HepG2 (cell line): ENCODE measurements at regions of chr5 and their contacts with region 1.

Region 1: DNA sequence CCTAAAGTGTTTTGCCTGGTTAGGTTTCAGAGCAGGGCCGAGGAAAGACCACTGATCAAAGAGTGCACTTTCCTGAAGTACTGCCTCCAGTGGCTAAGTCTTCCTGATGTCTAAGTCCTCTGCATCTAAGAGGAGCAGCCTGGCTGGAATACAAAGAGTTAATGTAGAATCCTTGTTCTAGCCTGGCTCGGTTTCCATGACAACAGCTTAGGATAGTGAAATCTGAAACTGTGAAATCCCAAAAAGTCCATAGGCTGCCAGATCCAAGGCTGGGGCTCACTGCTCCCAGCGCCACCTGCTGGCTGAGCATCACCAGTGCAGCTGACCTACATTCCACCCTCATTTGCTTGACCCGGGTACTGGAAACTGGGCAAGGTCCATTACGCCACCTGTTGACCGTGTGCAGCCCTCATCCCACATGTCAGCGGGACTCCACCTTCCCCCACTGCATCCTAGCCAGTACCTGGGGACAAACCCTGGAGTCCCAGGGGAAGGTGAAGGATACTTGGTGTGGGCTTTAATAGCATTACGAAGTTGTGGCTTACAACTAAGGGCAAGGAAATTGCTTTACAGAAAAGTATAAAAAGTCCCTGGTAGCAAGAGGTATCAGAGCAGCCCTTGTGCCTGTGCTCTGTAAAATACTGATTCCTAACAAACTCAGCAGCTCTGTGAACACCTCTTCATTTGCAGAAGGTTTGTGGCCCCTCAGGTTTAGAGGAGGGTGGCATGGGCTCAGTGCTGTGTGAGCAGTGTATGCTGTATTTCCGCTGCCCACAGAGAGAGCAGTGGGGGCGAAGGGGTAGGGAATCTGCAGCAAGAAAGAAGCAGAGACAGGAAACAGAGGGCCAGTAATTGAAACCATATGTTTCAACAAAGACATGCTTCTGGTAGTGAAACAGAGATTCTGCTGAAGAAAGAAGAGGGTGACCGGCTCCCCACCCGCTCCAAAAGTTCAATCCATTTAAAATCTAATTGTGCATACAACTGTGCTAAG is 36.0 kb downstream of the PCDHGC5 start:
- DNase-seq: peak; percentile 85
- ATAC-seq: peak; percentile 98
- H3K4me3 ChIP-seq: no peak overlapping the region
- H3K27ac ChIP-seq: peak overlapping the region; percentile 34
- H3K4me1 ChIP-seq: peaks cover 50% of the 10 kb centered on the region
- H3K27me3 ChIP-seq: no peaks in the 10 kb centered on the region
- CTCF ChIP-seq: peak; percentile 99
- EP300 ChIP-seq: peak; percentile 8 to 48; a peak in 1 of 4 replicates
- POLR2A ChIP-seq: no peak
- RAD21 ChIP-seq: peak; percentile 90

Region 2: GRCh38 chr5:141199359-141200235 is 325.3 kb before region 1 on chr5 and contains the start of gene PCDHB11:
- CTCF ChIA-PET with region 1: no interaction called
- POLR2A ChIA-PET with region 1: no interaction called
- in situ Hi-C with region 1: no loop called
- intact Hi-C with region 1: no loop called
- DNase-seq: peak; percentile 6
- ATAC-seq: peak; percentile 50; the same call in 1 of the 3 replicates
- H3K4me3 ChIP-seq: no peak within 1 kb of the TSS
- H3K27ac ChIP-seq: no peak within 1 kb of the TSS
- H3K4me1 ChIP-seq: no peaks in the 10 kb centered on the region
- H3K27me3 ChIP-seq: no peaks in the 10 kb centered on the region
- CTCF ChIP-seq: peak; percentile 60
- EP300 ChIP-seq: no peak
- POLR2A ChIP-seq: no peak
- RAD21 ChIP-seq: no peak
- total RNA-seq, gene PCDHB11: 0.07 TPM in 1 of 2 replicates, not detected in the other

Region 3: GRCh38 chr5:141223112-141223783 is 301.7 kb before region 1 on chr5 and contains the start of gene PCDHB14:
- CTCF ChIA-PET with region 1: interaction called, 5 read pairs
- POLR2A ChIA-PET with region 1: no interaction called
- in situ Hi-C with region 1: no loop called
- intact Hi-C with region 1: loop called (anchors 5 kb)
- DNase-seq: peak; percentile 45
- ATAC-seq: peak; percentile 92
- H3K4me3 ChIP-seq: peak within 1 kb of the TSS; percentile 41 to 57 (median 52)
- H3K27ac ChIP-seq: no peak within 1 kb of the TSS
- H3K4me1 ChIP-seq: 0 out of 2 replicates have a peak, but pooled peaks cover 7% of the 10 kb centered on the region
- H3K27me3 ChIP-seq: peaks cover 3 to 4% of the 10 kb centered on the region in 2 experiments; a peak in 3 of 5 replicates
- CTCF ChIP-seq: peak; percentile 65
- EP300 ChIP-seq: no peak
- POLR2A ChIP-seq: no peak
- RAD21 ChIP-seq: no peak
- total RNA-seq, gene PCDHB14: 0.32 and 0.40 TPM in 2 replicates

Region 4: GRCh38 chr5:141349917-141350619 is 174.8 kb before region 1 on chr5 and contains the start of gene PCDHGB1:
- CTCF ChIA-PET with region 1: interaction called, 5 read pairs
- POLR2A ChIA-PET with region 1: no interaction called
- in situ Hi-C with region 1: loop called (anchors 10 kb)
- intact Hi-C with region 1: loop called (anchors 10 kb)
- DNase-seq: peak; percentile 75
- ATAC-seq: peak; percentile 98
- H3K4me3 ChIP-seq: peak within 1 kb of the TSS; percentile 49 to 71 (median 61)
- H3K27ac ChIP-seq: no peak within 1 kb of the TSS
- H3K4me1 ChIP-seq: no peaks in the 10 kb centered on the region; the same call in 1 of the 2 replicates
- H3K27me3 ChIP-seq: no peaks in the 10 kb centered on the region; a peak in 1 of 5 replicates
- CTCF ChIP-seq: peak; percentile 85
- EP300 ChIP-seq: no peak
- POLR2A ChIP-seq: peak in 1 of 2 experiments; percentile 50; a peak in 1 of 4 replicates
- RAD21 ChIP-seq: peak; percentile 67
- total RNA-seq, gene PCDHGB1: 0.95 and 2.6 TPM in 2 replicates

Region 5: GRCh38 chr5:141359790-141360426 is 165.0 kb before region 1 on chr5 and contains the start of gene PCDHGB2:
- CTCF ChIA-PET with region 1: interaction called, 10 read pairs
- POLR2A ChIA-PET with region 1: no interaction called
- in situ Hi-C with region 1: loop called (anchors 10 kb)
- intact Hi-C with region 1: loop called (anchors 10 kb)
- DNase-seq: peak; percentile 48
- ATAC-seq: peak; percentile 78
- H3K4me3 ChIP-seq: peak within 1 kb of the TSS; percentile 17 to 63 (median 50); a peak in 5 of 6 replicates
- H3K27ac ChIP-seq: no peak within 1 kb of the TSS
- H3K4me1 ChIP-seq: no peaks in the 10 kb centered on the region
- H3K27me3 ChIP-seq: no peaks in the 10 kb centered on the region
- CTCF ChIP-seq: peak; percentile 62
- EP300 ChIP-seq: no peak
- POLR2A ChIP-seq: no peak
- RAD21 ChIP-seq: no peak
- total RNA-seq, gene PCDHGB2: 0.64 and 0.77 TPM in 2 replicates

Region 6: GRCh38 chr5:141412854-141413539 is 111.9 kb before region 1 on chr5 and contains the start of gene PCDHGA10:
- CTCF ChIA-PET with region 1: interaction called, 13 read pairs
- POLR2A ChIA-PET with region 1: no interaction called
- in situ Hi-C with region 1: loop called (anchors 5 kb)
- intact Hi-C with region 1: loop called (anchors 1 kb)
- DNase-seq: peak; percentile 15
- ATAC-seq: peak; percentile 75
- H3K4me3 ChIP-seq: no peak within 1 kb of the TSS
- H3K27ac ChIP-seq: no peak within 1 kb of the TSS
- H3K4me1 ChIP-seq: no peaks in the 10 kb centered on the region
- H3K27me3 ChIP-seq: no peaks in the 10 kb centered on the region
- CTCF ChIP-seq: peak; percentile 59
- EP300 ChIP-seq: no peak
- POLR2A ChIP-seq: no peak
- RAD21 ChIP-seq: no peak
- total RNA-seq, gene PCDHGA10: 0.06 and 0.18 TPM in 2 replicates

Region 7: GRCh38 chr5:141419074-141419880 is 105.6 kb before region 1 on chr5:
- CTCF ChIA-PET with region 1: interaction called, 13 read pairs
- POLR2A ChIA-PET with region 1: no interaction called
- in situ Hi-C with region 1: loop called (anchors 5 kb)
- intact Hi-C with region 1: loop called (anchors 1 kb)
- DNase-seq: no peak
- ATAC-seq: no peak
- H3K4me3 ChIP-seq: no peak overlapping the region
- H3K27ac ChIP-seq: no peak overlapping the region
- H3K4me1 ChIP-seq: no peaks in the 10 kb centered on the region
- H3K27me3 ChIP-seq: no peaks in the 10 kb centered on the region
- CTCF ChIP-seq: no peak
- EP300 ChIP-seq: no peak
- POLR2A ChIP-seq: no peak
- RAD21 ChIP-seq: no peak

Region 8: GRCh38 chr5:141501761-141502160 is 23.1 kb before region 1 on chr5:
- CTCF ChIA-PET with region 1: no interaction called
- POLR2A ChIA-PET with region 1: no interaction called
- in situ Hi-C with region 1: no loop called
- intact Hi-C with region 1: no loop called
- DNase-seq: no peak
- ATAC-seq: no peak
- H3K4me3 ChIP-seq: no peak overlapping the region
- H3K27ac ChIP-seq: no peak overlapping the region
- H3K4me1 ChIP-seq: no peaks in the 10 kb centered on the region
- H3K27me3 ChIP-seq: no peaks in the 10 kb centered on the region
- CTCF ChIP-seq: no peak
- EP300 ChIP-seq: no peak
- POLR2A ChIP-seq: no peak
- RAD21 ChIP-seq: no peak

Region 9: GRCh38 chr5:141512390-141512910 is 12.5 kb before region 1 on chr5:
- CTCF ChIA-PET with region 1: interaction called, 13 read pairs
- POLR2A ChIA-PET with region 1: no interaction called
- in situ Hi-C with region 1: no loop called
- intact Hi-C with region 1: no loop called
- DNase-seq: peak; percentile 45
- ATAC-seq: peak; percentile 72
- H3K4me3 ChIP-seq: no peak overlapping the region
- H3K27ac ChIP-seq: no peak overlapping the region
- H3K4me1 ChIP-seq: peaks cover 6% of the 10 kb centered on the region; the same call in 1 of the 2 replicates
- H3K27me3 ChIP-seq: no peaks in the 10 kb centered on the region; a peak in 1 of 5 replicates
- CTCF ChIP-seq: peak; percentile 82
- EP300 ChIP-seq: no peak
- POLR2A ChIP-seq: no peak
- RAD21 ChIP-seq: peak; percentile 56; the same call in 1 of the 2 replicates